ENCODE measurements at regions of chr3 and their contacts with region 1.

Region 1: DNA sequence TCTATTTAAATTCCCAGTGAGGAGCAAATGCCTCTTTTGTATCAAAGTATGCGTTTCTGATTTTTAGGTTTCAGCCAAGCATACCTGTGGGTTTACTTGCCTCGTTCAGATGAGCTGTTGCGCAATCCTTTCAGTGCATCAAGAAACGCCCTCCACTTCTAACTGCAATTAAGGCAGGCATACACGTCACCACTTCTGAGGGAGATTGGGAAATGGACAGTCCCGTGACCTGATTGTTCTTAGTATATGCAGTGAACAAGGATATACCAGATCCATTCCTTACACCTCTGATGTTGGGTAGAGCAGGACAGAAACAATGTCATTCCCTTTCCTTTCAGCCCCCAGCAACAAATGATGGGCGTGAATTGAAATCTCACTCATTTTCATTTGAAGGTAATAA is 219.0 kb downstream of the ITPR1 start:
- DNase-seq: peak; percentile 99
- H3K4me3 ChIP-seq: no peak overlapping the region
- H3K27ac ChIP-seq: peak overlapping the region; percentile 96
- H3K4me1 ChIP-seq: peaks cover 22% of the 10 kb centered on the region
- H3K27me3 ChIP-seq: no peaks in the 10 kb centered on the region
- CTCF ChIP-seq: no peak

Region 2: DNA sequence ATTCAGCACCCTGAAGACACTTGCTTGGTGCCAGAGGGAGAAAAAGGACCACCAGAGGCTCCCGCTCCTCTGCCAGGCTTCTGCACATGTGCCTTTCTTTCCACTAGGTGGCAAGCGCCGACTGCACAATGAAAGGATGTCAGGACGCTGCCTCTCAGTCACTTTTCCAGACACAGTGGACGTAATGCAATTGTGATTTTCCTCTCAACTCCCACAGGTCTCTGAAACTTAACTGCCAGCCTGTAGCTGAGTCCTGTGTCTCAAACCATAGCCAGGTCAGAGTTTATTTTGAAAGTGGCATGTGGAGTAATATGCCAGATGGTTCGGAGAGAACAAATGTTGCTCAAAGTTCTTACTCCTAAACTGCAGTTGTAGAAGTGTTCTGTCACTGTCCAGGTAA is 56.1 kb before region 1 on chr3:
- CTCF ChIA-PET with region 1: no interaction called
- dilution Hi-C with region 1: no loop called
- in situ Hi-C with region 1: no loop called
- intact Hi-C with region 1: loop called (anchors 1 kb)
- DNase-seq: peak; percentile 40
- H3K4me3 ChIP-seq: no peak overlapping the region
- H3K27ac ChIP-seq: no peak overlapping the region
- H3K4me1 ChIP-seq: peaks cover under 1% of the 10 kb centered on the region
- H3K27me3 ChIP-seq: no peaks in the 10 kb centered on the region
- CTCF ChIP-seq: peak; percentile 93 to 95

Region 3: DNA sequence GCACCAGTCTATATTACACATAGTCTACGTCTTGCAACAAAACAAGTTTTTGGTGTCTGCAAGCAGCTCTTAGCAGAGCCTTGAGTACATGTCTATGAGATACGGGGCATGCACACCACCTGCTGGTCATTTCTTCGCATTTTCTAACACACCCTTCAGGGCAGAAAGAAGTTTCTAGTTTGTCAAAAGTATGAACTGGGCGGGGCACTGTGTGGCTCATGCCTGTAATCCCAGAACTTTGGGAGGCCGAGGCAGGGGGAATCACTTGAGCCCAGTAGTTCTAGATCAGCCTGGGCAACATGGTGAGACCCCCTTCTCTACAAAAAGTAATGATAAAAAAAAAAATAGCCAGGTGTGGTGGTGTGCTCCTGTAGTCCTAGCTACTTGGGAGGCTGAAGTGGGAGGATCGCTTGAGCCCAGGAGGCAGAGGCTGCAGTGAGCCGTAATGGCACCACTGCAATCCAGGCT is 345.7 kb after region 1 on chr3:
- CTCF ChIA-PET with region 1: interaction called, 30 read pairs
- dilution Hi-C with region 1: no loop called
- in situ Hi-C with region 1: loop called (anchors 10 kb)
- intact Hi-C with region 1: loop called (anchors 1 kb)
- DNase-seq: peak; percentile 86
- H3K4me3 ChIP-seq: no peak overlapping the region
- H3K27ac ChIP-seq: no peak overlapping the region
- H3K4me1 ChIP-seq: peaks cover 3% of the 10 kb centered on the region
- H3K27me3 ChIP-seq: no peaks in the 10 kb centered on the region
- CTCF ChIP-seq: peak; percentile 76

Region 4: GRCh38 chr3:5122030-5122740 is 410.0 kb after region 1 on chr3 and contains the start of gene ARL8B:
- CTCF ChIA-PET with region 1: interaction called, 3 read pairs
- dilution Hi-C with region 1: no loop called
- in situ Hi-C with region 1: no loop called
- intact Hi-C with region 1: loop called (anchors 1 kb)
- DNase-seq: peak; percentile 85
- H3K4me3 ChIP-seq: peak within 1 kb of the TSS; percentile 76 to 93 (median 93)
- H3K27ac ChIP-seq: peak within 1 kb of the TSS; percentile 89
- H3K4me1 ChIP-seq: peaks cover 23% of the 10 kb centered on the region
- H3K27me3 ChIP-seq: no peaks in the 10 kb centered on the region
- CTCF ChIP-seq: peak; percentile 94 to 95
- total RNA-seq, gene ARL8B: 60.7 to 77.8 TPM

Region 5: DNA sequence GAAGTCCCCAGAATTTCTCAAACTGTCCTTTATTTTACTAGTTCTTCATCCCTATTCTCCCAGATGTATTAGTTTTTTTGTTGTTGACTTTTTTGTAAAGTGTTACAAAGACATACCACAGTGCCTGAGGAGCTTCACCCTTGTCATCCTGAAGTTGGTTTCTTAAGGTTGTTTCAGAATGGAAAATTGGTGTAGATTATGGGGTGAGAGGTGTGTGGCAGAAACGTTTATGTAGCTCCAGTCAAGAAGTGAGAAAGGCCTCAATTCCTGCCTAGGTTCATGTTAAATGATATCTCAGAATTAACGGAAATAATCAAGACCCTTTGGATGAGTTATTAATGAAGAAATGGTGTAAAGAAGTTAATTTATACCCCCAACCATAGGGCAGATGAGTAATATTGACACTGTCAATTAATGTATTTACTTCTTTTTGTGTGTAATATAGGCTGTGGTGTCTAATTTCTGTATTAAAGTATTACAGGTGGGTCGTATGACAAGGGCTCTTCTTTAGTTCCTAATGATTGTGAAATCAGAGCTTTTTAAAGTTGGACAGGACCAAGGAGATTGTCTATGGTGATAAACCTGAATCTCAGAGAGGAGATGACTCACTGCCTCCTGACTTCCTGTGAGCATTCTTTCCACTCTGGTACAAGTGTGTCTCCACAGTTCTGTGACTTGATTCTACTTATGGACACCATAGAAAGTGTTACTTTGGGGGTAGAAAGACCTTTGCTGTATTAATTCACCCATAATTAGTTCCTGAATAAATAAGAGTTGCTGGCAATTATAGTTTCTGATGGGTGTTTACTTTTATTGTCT is 482.4 kb after region 1 on chr3:
- CTCF ChIA-PET with region 1: interaction called, 4 read pairs
- dilution Hi-C with region 1: no loop called
- in situ Hi-C with region 1: no loop called
- intact Hi-C with region 1: loop called (anchors 5 kb)
- DNase-seq: peak; percentile 90
- H3K4me3 ChIP-seq: peak overlapping the region in 1 of 3 experiments; percentile 3
- H3K27ac ChIP-seq: peak overlapping the region; percentile 95
- H3K4me1 ChIP-seq: peaks cover 69% of the 10 kb centered on the region
- H3K27me3 ChIP-seq: no peaks in the 10 kb centered on the region
- CTCF ChIP-seq: no peak

Region 6: DNA sequence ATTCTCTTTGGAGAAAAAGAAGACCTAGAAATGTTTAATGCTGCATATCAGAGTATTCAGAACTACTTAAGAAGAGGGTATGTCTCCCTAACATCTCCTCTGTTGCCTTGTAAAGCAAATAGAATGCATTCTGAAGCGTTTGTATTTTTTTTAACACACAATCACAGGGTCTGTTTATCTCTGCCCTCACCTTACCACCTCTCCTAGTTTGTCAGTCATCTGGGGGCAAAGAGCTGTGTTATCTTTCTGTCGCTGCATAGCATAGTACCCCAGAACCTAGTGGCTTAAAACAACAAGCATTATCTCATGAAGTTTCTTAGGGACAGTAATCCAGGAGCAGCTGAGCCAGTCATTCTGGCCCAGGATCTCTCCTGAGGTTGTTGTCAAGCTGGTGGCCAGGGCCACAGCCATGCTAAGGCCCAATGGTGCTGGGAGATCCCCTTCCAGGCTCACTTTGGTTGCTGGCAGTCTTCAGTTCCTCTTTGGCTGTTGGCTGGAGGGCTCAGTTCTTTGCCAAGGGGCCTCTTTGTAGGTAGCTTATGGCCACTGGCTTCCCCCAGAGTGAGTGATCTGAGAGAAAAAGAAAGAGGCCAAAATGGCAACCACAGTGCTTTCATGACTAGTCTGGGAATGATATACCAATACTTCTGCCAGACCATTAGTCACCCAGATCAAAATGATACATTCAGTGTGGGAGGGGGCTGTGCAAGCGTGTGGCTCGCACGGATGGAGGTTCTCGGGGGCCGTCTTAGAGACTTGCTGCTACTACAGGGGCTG is 493.2 kb after region 1 on chr3:
- CTCF ChIA-PET with region 1: no interaction called
- dilution Hi-C with region 1: no loop called
- in situ Hi-C with region 1: loop called in 1 of 2 experiments (anchors 10 kb)
- intact Hi-C with region 1: no loop called
- DNase-seq: no peak
- H3K4me3 ChIP-seq: no peak overlapping the region
- H3K27ac ChIP-seq: no peak overlapping the region
- H3K4me1 ChIP-seq: no peaks in the 10 kb centered on the region
- H3K27me3 ChIP-seq: no peaks in the 10 kb centered on the region
- CTCF ChIP-seq: no peak